ENCODE measurements at regions of chr6 and their contacts with region 1.

Region 1: DNA sequence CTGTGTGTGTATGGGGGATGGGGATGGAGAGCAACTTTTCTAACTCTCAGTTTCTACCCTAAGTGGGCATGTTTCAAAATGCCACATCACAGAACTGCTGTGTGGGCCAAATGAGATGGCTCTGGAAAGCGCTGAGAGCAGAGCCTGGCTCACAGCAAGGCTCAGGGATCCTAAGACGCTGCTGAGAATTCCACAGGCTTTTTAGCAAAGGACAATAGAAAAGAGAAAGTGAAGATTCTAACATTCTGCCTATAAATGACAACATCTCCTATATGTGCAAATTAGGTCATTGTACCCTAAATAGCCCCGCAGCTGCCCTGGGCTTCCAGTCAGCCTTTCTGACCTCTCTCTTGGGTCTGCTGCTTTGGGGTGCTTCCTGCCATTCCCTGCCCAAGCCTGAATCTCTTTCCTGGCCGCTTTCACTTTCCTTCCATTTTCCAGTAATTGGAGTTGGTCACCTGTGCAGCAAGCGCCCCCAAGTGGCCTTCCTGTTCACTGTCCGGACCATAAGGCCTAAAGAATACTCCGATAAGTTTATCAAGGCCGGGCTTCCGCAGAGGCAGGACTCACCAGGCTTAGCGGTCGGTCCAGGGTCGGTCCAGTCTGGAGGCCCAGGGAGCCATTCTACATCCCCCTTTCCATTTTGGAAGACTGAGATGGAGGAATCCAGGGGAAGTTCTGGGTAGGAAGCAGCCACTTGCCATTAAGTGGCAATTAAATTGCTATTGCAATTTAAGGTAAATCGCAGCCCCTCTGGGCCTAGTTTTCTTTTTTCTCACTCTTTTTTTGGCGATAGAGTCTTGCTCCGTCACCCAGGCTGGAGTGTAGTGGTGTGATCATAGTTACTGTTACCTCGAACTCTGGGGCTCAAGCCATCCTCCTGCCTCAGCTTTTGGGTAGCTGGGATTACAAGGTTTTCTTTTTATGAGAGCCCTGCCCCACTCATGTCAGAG is 6.6 kb upstream of the DDR1 start:
- DNase-seq: peak; percentile 75 to 97 (median 82)
- ATAC-seq: peak; percentile 78
- H3K4me3 ChIP-seq: peak overlapping the region; percentile 2; the same call in 1 of the 2 replicates
- H3K27ac ChIP-seq: peak overlapping the region; percentile 94
- H3K4me1 ChIP-seq: peaks cover 65 to 70% of the 10 kb centered on the region in 2 experiments
- H3K27me3 ChIP-seq: no peaks in the 10 kb centered on the region
- CTCF ChIP-seq: peak; percentile 96 to 99 (median 98)
- EP300 ChIP-seq: peak; percentile 70
- POLR2A ChIP-seq: no peak
- RAD21 ChIP-seq: peak; percentile 98 to 99

Region 2: DNA sequence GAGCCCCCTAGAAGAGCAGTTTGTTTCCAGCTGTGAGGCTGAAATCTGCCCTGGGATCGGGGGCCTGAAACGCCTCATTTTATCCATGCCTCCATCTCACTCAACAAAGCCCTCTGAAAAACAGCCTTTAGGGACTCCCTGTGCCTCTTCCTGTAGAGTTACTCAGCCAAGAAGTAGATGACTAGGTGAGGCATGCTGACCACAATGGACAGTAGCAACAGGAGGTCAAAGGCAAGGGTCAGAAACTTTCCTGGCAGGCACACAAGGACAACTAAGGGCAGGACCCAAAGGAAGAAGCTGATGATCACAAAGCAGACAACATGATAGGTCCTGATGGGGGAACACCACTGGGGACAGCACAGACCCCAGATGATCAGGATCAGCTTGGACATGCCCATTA is 1402.7 kb before region 1 on chr6:
- CTCF ChIA-PET with region 1: no interaction called
- POLR2A ChIA-PET with region 1: no interaction called
- in situ Hi-C with region 1: no loop called
- intact Hi-C with region 1: no loop called
- DNase-seq: no peak
- ATAC-seq: no peak
- H3K4me3 ChIP-seq: no peak overlapping the region
- H3K27ac ChIP-seq: no peak overlapping the region
- H3K4me1 ChIP-seq: no peaks in the 10 kb centered on the region; a peak in 3 of 5 replicates
- H3K27me3 ChIP-seq: peaks cover 2 to 27% of the 10 kb centered on the region in 2 experiments; a peak in 3 of 5 replicates
- CTCF ChIP-seq: no peak
- EP300 ChIP-seq: no peak
- POLR2A ChIP-seq: no peak
- RAD21 ChIP-seq: no peak

Region 3: DNA sequence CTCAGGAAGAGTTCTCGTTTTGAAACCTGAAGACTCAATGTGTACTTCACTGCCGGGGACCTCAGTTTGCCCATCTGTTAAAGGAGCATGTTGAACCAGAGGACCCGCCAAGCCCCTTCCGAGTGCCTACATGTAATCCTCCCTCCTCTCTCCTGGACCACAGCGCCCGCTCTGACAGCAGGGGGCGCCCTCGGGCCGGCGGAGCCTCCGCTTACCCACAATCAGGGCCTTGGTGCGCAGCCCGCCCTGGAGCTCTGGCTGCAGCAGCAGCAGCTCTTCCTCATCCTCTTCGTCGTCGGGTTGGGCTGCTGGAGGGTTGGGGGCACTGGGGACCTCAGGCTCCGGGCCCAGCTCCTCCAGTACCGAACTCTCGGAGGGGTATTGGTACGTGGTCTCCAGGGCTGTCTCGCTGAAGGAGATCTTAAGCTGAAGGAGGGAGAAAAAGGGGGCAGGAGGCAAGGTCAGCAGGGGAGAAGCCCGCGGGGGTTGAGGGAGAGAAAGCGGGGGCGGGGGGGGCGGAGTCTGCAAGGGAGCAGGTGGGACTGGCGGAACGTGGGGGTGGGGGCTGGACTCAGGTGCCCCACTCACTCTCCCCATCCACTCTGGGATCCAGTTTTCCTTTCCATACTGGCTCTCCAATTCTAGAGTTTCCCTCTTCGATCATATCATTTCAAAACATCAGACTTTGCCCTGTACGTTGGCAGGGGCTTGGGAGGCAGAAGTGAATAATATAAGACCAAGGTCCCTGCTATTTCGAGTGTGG is 198.6 kb before region 1 on chr6:
- CTCF ChIA-PET with region 1: interaction called, 5 read pairs
- POLR2A ChIA-PET with region 1: interaction called, 4 read pairs
- in situ Hi-C with region 1: no loop called
- intact Hi-C with region 1: loop called (anchors 2 kb)
- DNase-seq: peak; percentile 81 to 95 (median 87)
- ATAC-seq: peak; percentile 79
- H3K4me3 ChIP-seq: peak overlapping the region; percentile 1; the same call in 1 of the 2 replicates
- H3K27ac ChIP-seq: no peak overlapping the region
- H3K4me1 ChIP-seq: peaks cover 29 to 48% of the 10 kb centered on the region in 2 experiments
- H3K27me3 ChIP-seq: no peaks in the 10 kb centered on the region
- CTCF ChIP-seq: peak; percentile 97 to 99 (median 98)
- EP300 ChIP-seq: peak; percentile 30; the same call in 1 of the 2 replicates
- POLR2A ChIP-seq: no peak
- RAD21 ChIP-seq: peak; percentile 98 to 99

Region 4: GRCh38 chr6:30742316-30743098 is 135.2 kb before region 1 on chr6 and contains the start of gene FLOT1:
- CTCF ChIA-PET with region 1: interaction called, 11 read pairs
- POLR2A ChIA-PET with region 1: interaction called, 8 read pairs
- in situ Hi-C with region 1: loop called (anchors 5 kb)
- intact Hi-C with region 1: loop called (anchors 1 kb)
- DNase-seq: peak; percentile 97 to 98 (median 97)
- ATAC-seq: peak; percentile 92
- H3K4me3 ChIP-seq: peak within 1 kb of the TSS; percentile 91
- H3K27ac ChIP-seq: peak within 1 kb of the TSS; percentile 87
- H3K4me1 ChIP-seq: peaks cover 38 to 47% of the 10 kb centered on the region in 2 experiments
- H3K27me3 ChIP-seq: no peaks in the 10 kb centered on the region
- CTCF ChIP-seq: 0 out of 6 replicates have a peak, but pooled peaks of 1 of the 3 experiments have one; percentile 2
- EP300 ChIP-seq: peak; percentile 36
- POLR2A ChIP-seq: peak; percentile 81
- RAD21 ChIP-seq: peak in 1 of 2 experiments; percentile 41; a peak in 3 of 4 replicates
- polyA plus RNA-seq, gene FLOT1: 11.7 to 12.0 TPM

Region 5: DNA sequence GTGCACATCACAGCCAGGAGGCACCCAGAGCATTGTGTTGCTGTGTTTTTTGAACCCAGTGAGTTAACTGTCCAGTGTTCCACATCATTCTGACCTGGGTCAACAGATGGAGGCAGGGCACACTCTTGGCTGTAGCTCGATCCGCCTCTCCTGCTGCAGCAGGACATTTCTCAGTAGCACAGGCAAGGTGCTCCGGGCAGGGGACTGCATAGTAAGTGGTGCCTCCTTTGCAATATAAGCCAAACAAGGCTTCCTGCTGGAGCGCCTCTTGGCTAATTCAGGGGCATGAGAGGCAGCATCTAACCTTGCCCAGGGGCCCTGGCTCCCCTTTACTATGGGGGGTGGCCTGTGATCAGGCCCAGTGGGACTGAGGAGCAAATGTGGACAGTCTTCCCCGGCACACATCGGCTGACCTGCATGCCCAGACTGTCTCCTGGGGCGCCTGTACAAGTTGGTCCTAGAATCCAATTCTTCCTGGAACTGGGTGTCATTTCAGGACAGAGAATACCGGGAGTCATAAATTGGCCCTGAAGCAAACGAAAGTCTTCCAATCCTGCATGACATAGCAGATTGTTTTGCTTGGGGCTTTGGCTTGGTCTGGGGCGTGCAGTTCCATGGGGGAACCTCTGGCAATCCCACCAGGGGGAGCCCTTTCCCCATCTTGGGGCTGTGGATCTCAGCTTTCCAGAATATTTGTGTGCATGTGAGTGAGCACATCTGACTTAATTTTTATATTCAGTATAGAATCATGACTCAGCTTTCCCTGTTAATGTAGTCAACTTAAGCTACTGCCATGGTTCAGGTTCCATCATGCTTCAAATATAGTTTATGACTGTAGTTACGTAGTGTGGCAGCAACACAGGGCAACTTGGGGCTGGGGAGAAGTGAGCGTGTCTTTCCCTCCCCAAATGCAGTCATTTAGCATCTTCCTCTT is 49.4 kb before region 1 on chr6:
- CTCF ChIA-PET with region 1: interaction called, 45 read pairs
- POLR2A ChIA-PET with region 1: interaction called, 12 read pairs
- in situ Hi-C with region 1: no loop called
- intact Hi-C with region 1: loop called (anchors 1 kb)
- DNase-seq: peak; percentile 92 to 95 (median 94)
- ATAC-seq: peak; percentile 97
- H3K4me3 ChIP-seq: no peak overlapping the region
- H3K27ac ChIP-seq: peak overlapping the region; percentile 76
- H3K4me1 ChIP-seq: peaks cover 11 to 23% of the 10 kb centered on the region in 2 experiments
- H3K27me3 ChIP-seq: no peaks in the 10 kb centered on the region
- CTCF ChIP-seq: peak; percentile 97 to 99 (median 99)
- EP300 ChIP-seq: peak; percentile 69
- POLR2A ChIP-seq: no peak
- RAD21 ChIP-seq: peak; percentile 100

Region 6: DNA sequence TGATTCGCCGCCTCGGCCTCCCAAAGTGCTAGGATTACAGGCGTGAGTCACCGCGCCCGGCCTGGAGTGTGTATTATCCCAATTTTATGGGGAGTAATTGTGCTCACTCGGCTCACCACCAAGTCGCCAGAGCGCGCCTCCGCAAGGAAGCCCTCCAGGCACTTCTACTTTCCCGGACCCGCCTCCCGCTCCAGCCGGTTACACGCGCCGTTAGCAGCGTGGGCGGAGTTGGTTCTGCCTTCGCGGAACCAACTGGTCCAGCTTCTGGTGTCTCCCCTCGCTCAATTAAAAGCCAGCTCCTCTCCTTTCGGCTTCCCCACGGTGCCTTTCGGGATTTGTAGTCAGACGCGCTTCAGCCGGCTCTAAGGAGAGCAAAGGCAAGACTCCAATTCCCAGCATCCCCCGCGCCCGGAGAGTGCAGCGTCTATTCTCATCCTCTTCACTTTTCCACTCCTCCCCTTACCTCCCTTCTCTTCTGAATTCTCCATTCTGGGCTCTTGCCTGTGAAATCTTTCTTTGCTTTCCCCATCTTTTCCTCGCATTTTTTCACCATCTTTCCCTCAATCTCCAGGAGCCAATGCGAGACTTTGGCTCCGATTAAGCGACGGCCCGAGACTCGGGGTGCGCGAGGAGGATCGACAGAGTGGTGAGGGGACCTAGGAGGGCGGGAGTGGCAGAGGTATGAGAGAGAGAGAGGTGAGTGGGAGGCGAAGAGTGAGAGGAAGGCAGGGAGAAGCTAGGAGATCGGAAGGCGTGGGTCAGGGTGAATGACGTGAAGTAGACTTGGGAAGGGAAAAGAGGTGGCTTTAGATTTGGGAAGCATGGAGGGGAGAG is 30.3 kb after region 1 on chr6 and contains the start of gene GTF2H4:
- CTCF ChIA-PET with region 1: no interaction called
- POLR2A ChIA-PET with region 1: interaction called, 17 read pairs
- in situ Hi-C with region 1: no loop called
- intact Hi-C with region 1: no loop called
- DNase-seq: peak; percentile 90 to 100 (median 93)
- ATAC-seq: peak; percentile 99
- H3K4me3 ChIP-seq: peak within 1 kb of the TSS; percentile 76
- H3K27ac ChIP-seq: peak within 1 kb of the TSS; percentile 71
- H3K4me1 ChIP-seq: peaks cover 5 to 13% of the 10 kb centered on the region in 2 experiments; a peak in 4 of 5 replicates
- H3K27me3 ChIP-seq: no peaks in the 10 kb centered on the region
- CTCF ChIP-seq: no peak; a peak in 1 of 6 replicates
- EP300 ChIP-seq: peak; percentile 61
- POLR2A ChIP-seq: peak; percentile 83
- RAD21 ChIP-seq: 0 out of 4 replicates have a peak, but pooled peaks have one; percentile 8 to 12
- polyA plus RNA-seq, gene GTF2H4: 3.6 to 5.2 TPM

Region 7: GRCh38 chr6:30960907-30961673 is 83.4 kb after region 1 on chr6:
- CTCF ChIA-PET with region 1: no interaction called
- POLR2A ChIA-PET with region 1: no interaction called
- in situ Hi-C with region 1: no loop called
- intact Hi-C with region 1: no loop called
- DNase-seq: no peak
- ATAC-seq: peak; percentile 57
- H3K4me3 ChIP-seq: no peak overlapping the region
- H3K27ac ChIP-seq: no peak overlapping the region
- H3K4me1 ChIP-seq: peaks cover under 1 to 2% of the 10 kb centered on the region in 2 experiments; a peak in 3 of 5 replicates
- H3K27me3 ChIP-seq: peaks cover 35 to 65% of the 10 kb centered on the region in 2 experiments; a peak in 3 of 5 replicates
- CTCF ChIP-seq: no peak
- EP300 ChIP-seq: no peak
- POLR2A ChIP-seq: no peak
- RAD21 ChIP-seq: no peak